ENCODE measurements at regions of chr17 and their contacts with region 1.

Region 1: GRCh38 chr17:4412933-4413831 is 20.6 kb upstream of the SPNS3 start:
- DNase-seq: peak; percentile 90 to 93
- H3K4me3 ChIP-seq: peak overlapping the region in 1 of 2 donors; percentile 12
- H3K27ac ChIP-seq: no peak overlapping the region
- H3K4me1 ChIP-seq: peaks cover 0 to 3% (median under 1%) of the 10 kb centered on the region in 4 donors
- H3K27me3 ChIP-seq: no peaks in the 10 kb centered on the region
- CTCF ChIP-seq: peak; percentile 86 to 98

Region 2: GRCh38 chr17:4199818-4200402 is 213.3 kb before region 1 on chr17:
- intact Hi-C with region 1: loop called (anchors 5 kb)
- DNase-seq: no peak
- H3K4me3 ChIP-seq: no peak overlapping the region
- H3K27ac ChIP-seq: peak overlapping the region in 1 of 2 donors; percentile 29
- H3K4me1 ChIP-seq: peaks cover 0 to 41% (median 14%) of the 10 kb centered on the region in 4 donors
- H3K27me3 ChIP-seq: no peaks in the 10 kb centered on the region
- CTCF ChIP-seq: peak; percentile 65 to 69

Region 3: DNA sequence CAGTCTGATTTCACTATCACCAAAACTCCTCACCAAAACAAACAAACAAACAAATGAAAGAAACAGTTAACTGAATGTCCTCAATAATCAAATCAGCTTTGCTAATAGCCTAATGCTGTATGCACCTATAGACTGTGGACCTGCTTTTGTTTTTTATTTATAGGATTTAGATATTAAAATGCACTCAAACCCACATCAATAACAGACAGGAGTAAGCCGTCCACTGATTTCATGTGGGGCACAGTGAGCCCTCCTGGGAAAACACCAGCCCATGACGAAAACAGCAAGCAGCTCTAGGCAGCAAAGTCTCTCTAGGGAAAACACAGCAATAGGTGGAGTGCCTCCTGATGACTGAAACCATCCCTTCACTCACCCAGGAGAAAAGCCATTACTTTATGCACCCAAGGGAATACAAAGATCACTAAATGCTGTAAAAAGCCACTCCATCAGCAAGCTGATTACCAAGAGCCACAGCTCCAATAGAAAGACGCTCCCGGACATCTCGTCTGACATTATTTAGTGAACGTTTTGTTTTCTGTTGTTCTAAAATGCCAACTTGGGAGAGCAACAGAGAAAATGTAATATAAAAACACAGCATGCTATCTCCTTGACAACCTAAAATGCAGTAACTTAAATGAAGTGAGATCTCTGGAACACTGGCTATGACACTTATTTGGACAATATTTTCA is 197.2 kb before region 1 on chr17:
- intact Hi-C with region 1: loop called (anchors 1 kb)
- DNase-seq: no peak
- H3K4me3 ChIP-seq: no peak overlapping the region
- H3K27ac ChIP-seq: peak overlapping the region; percentile 3 to 74
- H3K4me1 ChIP-seq: peaks cover 0 to 44% (median 15%) of the 10 kb centered on the region in 4 donors
- H3K27me3 ChIP-seq: no peaks in the 10 kb centered on the region
- CTCF ChIP-seq: no peak

Region 4: DNA sequence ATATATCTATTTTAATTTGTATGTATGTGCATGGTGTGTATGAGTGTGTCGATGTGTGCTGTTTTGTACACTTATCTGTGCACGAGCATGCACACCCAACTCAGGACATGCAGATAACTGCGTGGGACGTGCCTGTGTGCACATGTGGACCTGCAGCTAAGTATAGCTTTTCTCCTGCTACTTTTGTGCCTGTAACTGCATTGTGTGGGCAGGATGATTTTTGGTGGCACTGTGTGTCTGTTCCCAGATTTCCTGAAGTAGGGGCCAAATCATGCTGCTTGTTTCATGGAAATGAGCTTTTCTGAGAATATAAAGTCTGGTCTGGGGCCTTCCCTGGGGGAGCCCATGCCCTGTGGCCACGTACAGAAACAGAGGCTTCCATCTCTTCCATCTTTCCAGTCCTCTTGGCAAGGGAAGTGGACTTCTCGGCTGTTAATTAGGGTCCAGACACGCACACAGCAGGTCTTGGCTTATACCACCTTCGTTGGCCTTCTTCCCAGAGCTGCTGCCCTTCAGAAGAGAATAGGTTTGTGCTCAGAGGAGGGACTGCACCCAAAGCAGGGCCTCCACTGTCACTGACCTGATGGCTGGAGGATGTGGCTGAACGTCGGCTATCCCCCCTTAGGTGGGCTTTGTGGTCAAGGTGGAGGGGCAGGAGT is 50.8 kb after region 1 on chr17:
- intact Hi-C with region 1: no loop called
- DNase-seq: no peak
- H3K4me3 ChIP-seq: no peak overlapping the region
- H3K27ac ChIP-seq: no peak overlapping the region
- H3K4me1 ChIP-seq: peaks cover 0 to under 1% (median 0%) of the 10 kb centered on the region in 4 donors
- H3K27me3 ChIP-seq: no peaks in the 10 kb centered on the region
- CTCF ChIP-seq: no peak

Measured in tibial artery (tissue), 4 donors.